Heart right ventricle (tissue), 16 donors: ENCODE measurements at regions of chr12 and their contacts with region 1.

Region 1: GRCh38 chr12:108731105-108731865 is at the start of gene CORO1C:
- DNase-seq: peak; percentile 96 to 99
- ATAC-seq: peak; percentile 81 to 92 (median 88)
- H3K4me3 ChIP-seq: peak within 1 kb of the TSS; percentile 76 to 98 (median 91)
- H3K27ac ChIP-seq: peak within 1 kb of the TSS; percentile 95 to 99 (median 98)
- H3K4me1 ChIP-seq: peaks cover 0 to 58% (median 27%) of the 10 kb centered on the region in 9 donors
- H3K27me3 ChIP-seq: no peaks in the 10 kb centered on the region
- CTCF ChIP-seq: peak; percentile 76 to 96 (median 93)
- total RNA-seq, gene CORO1C: 50.2 to 88.6 (median 59.1) TPM

Region 2: DNA sequence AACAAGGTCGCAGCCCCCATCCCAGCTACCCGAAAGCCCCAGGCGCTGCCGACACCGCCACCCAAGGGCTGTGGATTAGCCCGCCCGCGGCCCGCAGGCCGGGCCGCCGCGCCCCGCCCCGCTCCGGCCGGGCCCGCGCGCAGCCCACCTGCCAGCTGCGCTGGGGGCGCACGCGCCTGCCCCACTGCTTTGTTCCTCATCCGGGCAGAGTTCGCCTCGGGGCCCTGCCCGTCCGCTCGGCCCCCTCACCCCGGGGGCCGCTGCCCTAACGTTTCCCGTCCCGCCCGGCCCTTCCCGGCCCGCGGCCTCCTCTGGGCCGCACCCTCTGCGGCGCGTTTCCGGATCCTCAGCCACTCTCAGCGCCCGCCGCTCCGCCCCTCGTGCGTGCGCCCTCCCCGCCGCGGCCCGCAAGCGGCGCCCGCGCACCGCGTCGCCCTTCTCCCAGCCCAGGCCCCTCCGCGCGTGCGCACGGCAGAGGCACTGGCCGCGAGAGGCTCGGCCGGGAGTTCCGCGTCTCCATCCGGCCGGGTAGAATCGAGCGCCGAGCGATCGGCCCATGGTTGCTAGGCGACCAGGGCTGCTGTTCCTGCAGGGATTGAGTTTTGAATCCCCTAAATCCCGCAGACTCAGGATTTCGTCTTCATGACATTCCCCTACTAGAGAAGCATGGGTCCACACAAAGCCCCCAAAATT is 970.3 kb before region 1 on chr12 and contains the start of gene PRDM4:
- intact Hi-C with region 1: no loop called
- DNase-seq: peak; percentile 93
- ATAC-seq: peak; percentile 98 to 100 (median 99)
- H3K4me3 ChIP-seq: peak within 1 kb of the TSS; percentile 66 to 94 (median 90)
- H3K27ac ChIP-seq: peak within 1 kb of the TSS; percentile 62 to 89 (median 82)
- H3K4me1 ChIP-seq: peaks cover 0 to 39% (median 31%) of the 10 kb centered on the region in 9 donors
- H3K27me3 ChIP-seq: no peaks in the 10 kb centered on the region
- CTCF ChIP-seq: peak in 8 of 9 donors; percentile 23 to 66 (median 44)
- total RNA-seq, gene PRDM4: 10.6 to 15.4 (median 12.6) TPM

Region 3: GRCh38 chr12:108270035-108270848 is 461.0 kb before region 1 on chr12:
- intact Hi-C with region 1: no loop called
- DNase-seq: no peak
- ATAC-seq: peak in 2 of 8 donors; percentile 54 to 67
- H3K4me3 ChIP-seq: no peak overlapping the region
- H3K27ac ChIP-seq: no peak overlapping the region
- H3K4me1 ChIP-seq: peaks cover 0 to 15% (median 0%) of the 10 kb centered on the region in 9 donors
- H3K27me3 ChIP-seq: peaks cover 0 to 7% (median 0%) of the 10 kb centered on the region in 7 donors
- CTCF ChIP-seq: no peak

Region 4: DNA sequence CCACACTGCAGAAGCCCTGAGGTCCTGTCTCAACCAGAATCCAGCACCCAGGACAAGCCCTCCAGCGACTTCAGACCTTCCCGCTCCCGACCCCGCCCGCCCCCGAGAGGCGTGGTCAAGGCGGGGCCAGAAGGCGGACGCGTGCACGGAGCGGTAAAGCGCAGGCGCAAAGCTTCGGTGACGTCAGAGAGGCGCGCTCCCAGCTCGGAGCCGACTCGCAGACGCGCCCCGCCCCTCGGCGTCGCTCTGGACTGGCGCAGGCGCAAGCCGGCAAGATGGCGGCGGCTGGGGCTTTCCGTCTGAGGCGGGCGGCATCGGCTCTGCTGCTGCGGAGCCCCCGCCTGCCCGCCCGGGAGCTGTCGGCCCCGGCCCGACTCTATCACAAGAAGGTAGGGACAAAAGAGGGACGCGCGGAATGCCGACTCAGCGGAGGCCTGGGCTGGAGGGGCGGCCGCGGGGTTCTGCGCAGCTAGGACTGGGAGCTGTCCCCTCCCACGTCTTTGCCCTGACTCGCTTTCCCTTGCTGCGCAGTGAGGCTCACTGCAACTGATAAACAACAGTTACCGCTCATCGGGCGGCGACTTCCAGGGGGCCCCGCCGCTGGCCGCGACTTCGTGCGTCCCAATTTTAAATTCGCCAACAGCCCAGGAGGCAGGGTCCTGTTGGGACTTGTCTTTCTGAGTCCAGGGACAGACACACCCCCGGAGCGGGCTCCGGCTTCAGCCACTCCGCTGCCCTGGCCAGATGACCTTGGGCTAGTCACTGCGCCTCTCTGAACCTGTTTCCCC is 168.7 kb before region 1 on chr12 and contains the start of gene ISCU:
- intact Hi-C with region 1: loop called in 2 of 10 experiments (anchors 5 kb)
- DNase-seq: peak; percentile 98 to 99
- ATAC-seq: peak; percentile 88 to 95 (median 92)
- H3K4me3 ChIP-seq: peak within 1 kb of the TSS; percentile 57 to 99 (median 90)
- H3K27ac ChIP-seq: peak within 1 kb of the TSS; percentile 78 to 97 (median 94)
- H3K4me1 ChIP-seq: peaks cover 5 to 80% (median 67%) of the 10 kb centered on the region in 9 donors
- H3K27me3 ChIP-seq: no peaks in the 10 kb centered on the region
- CTCF ChIP-seq: no peak
- total RNA-seq, gene ISCU: 321 to 630 (median 522) TPM

Region 5: DNA sequence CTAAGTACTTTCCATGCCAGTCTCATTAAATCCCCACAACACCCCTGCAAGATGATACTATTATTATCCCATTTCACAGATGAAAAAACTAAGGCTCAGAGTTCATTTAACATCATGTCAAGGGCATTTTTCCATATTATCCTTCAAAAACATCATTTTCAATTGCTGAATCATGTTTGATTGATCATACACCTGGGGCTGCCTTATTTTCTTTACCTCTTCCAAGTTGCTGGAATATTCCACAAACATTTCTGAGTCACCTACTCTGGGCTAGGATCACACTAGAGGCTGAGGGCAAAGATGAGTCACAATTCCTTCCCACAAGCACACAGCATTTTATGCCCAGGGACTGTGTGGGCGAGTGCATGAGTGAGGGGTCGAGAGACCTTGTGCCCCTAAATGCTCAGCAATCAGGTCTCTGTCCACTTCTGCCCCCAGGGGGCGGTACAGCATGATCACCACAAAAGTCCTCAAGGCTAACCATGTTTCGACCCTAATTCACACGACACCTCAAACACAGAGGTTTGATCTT is 119.3 kb before region 1 on chr12:
- intact Hi-C with region 1: no loop called
- DNase-seq: no peak
- ATAC-seq: no peak
- H3K4me3 ChIP-seq: no peak overlapping the region
- H3K27ac ChIP-seq: no peak overlapping the region
- H3K4me1 ChIP-seq: peaks cover 0 to 40% (median 11%) of the 10 kb centered on the region in 9 donors
- H3K27me3 ChIP-seq: no peaks in the 10 kb centered on the region
- CTCF ChIP-seq: peak in 7 of 9 donors; percentile 34 to 60 (median 48)

Region 6: GRCh38 chr12:108691175-108691997 is 39.9 kb before region 1 on chr12:
- intact Hi-C with region 1: loop called in 7 of 10 experiments (anchors 2 to 5 kb)
- DNase-seq: peak; percentile 89 to 96
- ATAC-seq: peak; percentile 93 to 96 (median 94)
- H3K4me3 ChIP-seq: peak overlapping the region in 8 of 10 donors; percentile 0 to 44 (median 26)
- H3K27ac ChIP-seq: peak overlapping the region; percentile 89 to 98 (median 94)
- H3K4me1 ChIP-seq: peaks cover 31 to 95% (median 81%) of the 10 kb centered on the region in 9 donors
- H3K27me3 ChIP-seq: no peaks in the 10 kb centered on the region
- CTCF ChIP-seq: peak; percentile 15 to 57 (median 40)

Region 7: DNA sequence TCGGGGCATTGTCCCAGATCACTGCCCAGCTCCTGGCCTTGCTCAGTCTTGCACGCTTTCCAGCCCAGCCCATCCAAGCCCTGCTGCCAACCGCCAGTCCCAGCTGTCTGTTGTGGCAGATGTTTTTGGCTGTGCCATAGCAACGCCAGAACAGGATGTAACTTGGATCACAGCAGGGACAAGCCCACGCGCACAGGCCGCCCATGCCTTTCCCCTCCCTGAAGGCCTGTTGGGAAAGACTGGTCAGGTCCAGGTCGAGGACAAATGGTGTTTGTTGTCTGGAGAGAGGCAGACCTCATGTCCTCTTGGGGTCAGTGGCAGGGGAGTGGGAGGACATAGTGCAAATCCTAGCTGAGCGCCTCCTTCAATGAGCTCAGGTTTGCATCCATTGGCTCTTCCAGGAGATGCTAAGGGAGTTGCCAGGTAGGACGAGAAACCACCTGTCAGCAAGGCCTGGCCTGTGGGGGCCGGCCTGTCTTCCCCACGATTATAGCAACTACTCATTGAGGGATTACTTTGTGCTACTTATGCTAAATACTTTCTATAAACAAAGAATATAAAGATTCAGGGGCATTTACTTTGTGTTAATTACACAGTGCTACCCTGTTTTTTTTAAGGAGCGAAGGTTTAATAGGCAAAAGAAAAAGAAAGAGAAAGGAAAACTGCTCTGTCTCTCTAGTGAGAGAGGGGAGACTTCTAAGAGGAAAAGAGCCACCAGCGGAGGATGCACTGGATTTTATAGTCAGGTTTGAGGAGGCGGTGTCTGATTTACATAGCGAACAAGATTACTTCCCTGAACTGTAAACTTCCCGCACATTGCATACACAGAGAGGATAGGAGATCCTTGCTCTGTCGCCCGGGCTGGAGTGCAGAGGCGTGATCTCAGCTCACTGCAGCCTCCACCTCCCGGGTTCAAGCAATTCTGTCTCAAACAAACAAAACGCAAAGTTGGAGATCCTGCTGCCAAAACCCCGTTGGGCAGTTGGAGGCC is 42.8 kb after region 1 on chr12:
- intact Hi-C with region 1: loop called in 5 of 10 experiments (anchors 1 to 5 kb)
- DNase-seq: peak; percentile 86 to 88
- ATAC-seq: peak; percentile 88 to 97 (median 94)
- H3K4me3 ChIP-seq: no peak overlapping the region
- H3K27ac ChIP-seq: peak overlapping the region; percentile 31 to 86 (median 73)
- H3K4me1 ChIP-seq: peaks cover 17 to 46% (median 33%) of the 10 kb centered on the region in 9 donors
- H3K27me3 ChIP-seq: no peaks in the 10 kb centered on the region
- CTCF ChIP-seq: no peak

Region 8: GRCh38 chr12:108850854-108851573 is 119.7 kb after region 1 on chr12:
- intact Hi-C with region 1: loop called in 6 of 10 experiments (anchors 5 kb)
- DNase-seq: peak; percentile 62 to 82
- ATAC-seq: peak in 7 of 8 donors; percentile 20 to 56 (median 53)
- H3K4me3 ChIP-seq: peak overlapping the region in 4 of 10 donors; percentile 35 to 40 (median 39)
- H3K27ac ChIP-seq: peak overlapping the region in 8 of 10 donors; percentile 65 to 98 (median 97)
- H3K4me1 ChIP-seq: peaks cover 50 to 96% (median 89%) of the 10 kb centered on the region in 9 donors
- H3K27me3 ChIP-seq: no peaks in the 10 kb centered on the region
- CTCF ChIP-seq: peak in 5 of 9 donors; percentile 17 to 45 (median 38)